SK-N-SH (cell line): ENCODE measurements at regions of chr6 and their contacts with region 1.

Region 1: DNA sequence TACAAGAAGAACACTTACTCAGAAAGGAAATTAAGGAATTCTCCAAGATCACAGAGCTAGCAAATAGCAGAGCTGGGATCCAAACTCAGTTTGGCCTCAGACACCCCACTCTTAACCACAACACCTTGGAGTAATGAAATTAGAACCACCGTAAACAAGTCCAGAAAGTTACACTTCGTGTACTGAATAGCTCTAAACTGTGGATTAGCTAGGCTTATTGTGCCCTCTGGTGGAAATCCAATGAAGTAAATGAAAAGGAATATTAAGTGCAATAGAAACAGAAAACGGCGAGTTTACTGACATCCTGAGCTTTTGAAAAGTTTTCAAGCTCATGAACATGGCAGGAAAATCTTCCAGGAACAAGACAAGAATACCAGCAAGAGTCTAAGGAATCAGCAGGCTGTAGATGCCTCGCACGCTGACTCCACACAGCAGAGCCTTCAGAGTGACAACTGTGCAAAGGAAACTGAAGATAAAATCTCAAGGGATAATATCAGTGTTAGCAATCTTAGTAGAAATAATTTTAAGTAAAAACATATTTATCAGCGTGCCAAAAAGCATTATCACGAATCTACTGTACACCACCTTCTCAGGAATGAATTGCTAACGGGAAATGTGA is 34.6 kb downstream of the FBXO5 start:
- DNase-seq: peak; percentile 49
- H3K4me3 ChIP-seq: peak overlapping the region; percentile 24 to 28; a peak in 2 of 4 replicates
- H3K27ac ChIP-seq: no peak overlapping the region
- H3K4me1 ChIP-seq: peaks cover 2 to 13% of the 10 kb centered on the region in 2 experiments; a peak in 3 of 4 replicates
- H3K27me3 ChIP-seq: no peaks in the 10 kb centered on the region
- CTCF ChIP-seq: peak; percentile 71
- EP300 ChIP-seq: no peak
- RAD21 ChIP-seq: peak; percentile 96

Region 2: DNA sequence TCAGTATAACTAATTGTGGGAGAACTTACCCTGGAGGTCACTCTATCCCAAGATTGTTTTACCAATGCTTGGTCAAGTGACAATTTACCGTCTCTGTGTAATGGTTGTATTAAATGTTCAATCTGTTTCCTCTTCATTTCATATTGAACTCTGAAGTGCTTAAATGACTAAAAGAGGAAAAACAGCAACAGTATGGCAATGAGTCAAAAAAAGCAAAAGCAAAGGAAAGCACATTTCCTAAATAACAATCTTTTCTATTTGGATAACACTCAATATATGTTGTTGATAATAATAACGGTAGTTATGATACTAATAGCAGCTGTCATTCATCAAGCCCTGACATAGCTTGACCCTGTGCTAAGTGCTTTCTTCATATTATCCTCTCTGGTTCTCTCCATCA is 463.5 kb before region 1 on chr6:
- CTCF ChIA-PET with region 1: interaction called, 10 read pairs
- POLR2A ChIA-PET with region 1: no interaction called
- DNase-seq: no peak
- H3K4me3 ChIP-seq: no peak overlapping the region
- H3K27ac ChIP-seq: no peak overlapping the region
- H3K4me1 ChIP-seq: no peaks in the 10 kb centered on the region
- H3K27me3 ChIP-seq: no peaks in the 10 kb centered on the region
- CTCF ChIP-seq: no peak
- EP300 ChIP-seq: no peak
- RAD21 ChIP-seq: no peak

Region 3: GRCh38 chr6:152716322-152716721 is 231.9 kb before region 1 on chr6:
- CTCF ChIA-PET with region 1: interaction called, 15 read pairs
- POLR2A ChIA-PET with region 1: no interaction called
- DNase-seq: no peak
- H3K4me3 ChIP-seq: no peak overlapping the region
- H3K27ac ChIP-seq: no peak overlapping the region
- H3K4me1 ChIP-seq: peaks cover 0 to 9% of the 10 kb centered on the region in 2 experiments; a peak in 3 of 4 replicates
- H3K27me3 ChIP-seq: no peaks in the 10 kb centered on the region
- CTCF ChIP-seq: peak; percentile 49
- EP300 ChIP-seq: no peak
- RAD21 ChIP-seq: peak; percentile 67

Region 4: GRCh38 chr6:152745509-152746171 is 202.6 kb before region 1 on chr6:
- CTCF ChIA-PET with region 1: interaction called, 156 read pairs
- POLR2A ChIA-PET with region 1: no interaction called
- DNase-seq: no peak
- H3K4me3 ChIP-seq: no peak overlapping the region
- H3K27ac ChIP-seq: peak overlapping the region; percentile 39 to 88; a peak in 3 of 4 replicates
- H3K4me1 ChIP-seq: peaks cover 4 to 10% of the 10 kb centered on the region in 2 experiments; a peak in 3 of 4 replicates
- H3K27me3 ChIP-seq: no peaks in the 10 kb centered on the region
- CTCF ChIP-seq: no peak
- EP300 ChIP-seq: no peak
- RAD21 ChIP-seq: no peak

Region 5: GRCh38 chr6:152863618-152864326 is 84.5 kb before region 1 on chr6:
- CTCF ChIA-PET with region 1: interaction called, 31 read pairs
- POLR2A ChIA-PET with region 1: no interaction called
- DNase-seq: peak; percentile 36
- H3K4me3 ChIP-seq: no peak overlapping the region
- H3K27ac ChIP-seq: no peak overlapping the region; a peak in 1 of 4 replicates
- H3K4me1 ChIP-seq: no peaks in the 10 kb centered on the region; a peak in 1 of 4 replicates
- H3K27me3 ChIP-seq: no peaks in the 10 kb centered on the region
- CTCF ChIP-seq: peak; percentile 72
- EP300 ChIP-seq: no peak
- RAD21 ChIP-seq: peak; percentile 89

Region 6: DNA sequence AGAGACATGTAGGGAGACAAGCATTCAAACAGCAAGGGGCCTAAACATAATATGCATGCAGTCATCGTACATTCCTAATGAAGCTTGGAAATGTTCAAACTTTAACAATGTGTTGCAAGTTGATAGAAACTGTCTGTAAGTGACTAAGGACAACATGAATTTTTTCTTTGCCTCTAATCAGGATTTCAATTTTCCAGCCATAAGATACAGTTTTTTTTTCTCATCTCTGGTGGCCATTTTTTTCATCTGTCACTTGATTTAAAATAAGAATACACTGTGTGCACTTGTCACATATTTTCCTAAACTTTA is 76.4 kb after region 1 on chr6:
- CTCF ChIA-PET with region 1: interaction called, 10 read pairs
- POLR2A ChIA-PET with region 1: no interaction called
- DNase-seq: no peak
- H3K4me3 ChIP-seq: no peak overlapping the region
- H3K27ac ChIP-seq: no peak overlapping the region
- H3K4me1 ChIP-seq: no peaks in the 10 kb centered on the region
- H3K27me3 ChIP-seq: no peaks in the 10 kb centered on the region
- CTCF ChIP-seq: no peak; the same call in 1 of the 2 replicates
- EP300 ChIP-seq: no peak
- RAD21 ChIP-seq: no peak